GM12878 (cell line): ENCODE measurements at regions of chr1 and their contacts with region 1.

Region 1: GRCh38 chr1:25810341-25811299 is 9.1 kb upstream of the MTFR1L start:
- DNase-seq: no peak
- ATAC-seq: peak; percentile 91
- H3K4me3 ChIP-seq: no peak overlapping the region
- H3K27ac ChIP-seq: no peak overlapping the region
- H3K4me1 ChIP-seq: peaks cover 7% of the 10 kb centered on the region
- H3K27me3 ChIP-seq: no peaks in the 10 kb centered on the region
- CTCF ChIP-seq: peak; percentile 86 to 97 (median 95); a peak in 5 of 6 replicates
- EP300 ChIP-seq: no peak
- POLR2A ChIP-seq: no peak
- RAD21 ChIP-seq: peak; percentile 94

Region 2: DNA sequence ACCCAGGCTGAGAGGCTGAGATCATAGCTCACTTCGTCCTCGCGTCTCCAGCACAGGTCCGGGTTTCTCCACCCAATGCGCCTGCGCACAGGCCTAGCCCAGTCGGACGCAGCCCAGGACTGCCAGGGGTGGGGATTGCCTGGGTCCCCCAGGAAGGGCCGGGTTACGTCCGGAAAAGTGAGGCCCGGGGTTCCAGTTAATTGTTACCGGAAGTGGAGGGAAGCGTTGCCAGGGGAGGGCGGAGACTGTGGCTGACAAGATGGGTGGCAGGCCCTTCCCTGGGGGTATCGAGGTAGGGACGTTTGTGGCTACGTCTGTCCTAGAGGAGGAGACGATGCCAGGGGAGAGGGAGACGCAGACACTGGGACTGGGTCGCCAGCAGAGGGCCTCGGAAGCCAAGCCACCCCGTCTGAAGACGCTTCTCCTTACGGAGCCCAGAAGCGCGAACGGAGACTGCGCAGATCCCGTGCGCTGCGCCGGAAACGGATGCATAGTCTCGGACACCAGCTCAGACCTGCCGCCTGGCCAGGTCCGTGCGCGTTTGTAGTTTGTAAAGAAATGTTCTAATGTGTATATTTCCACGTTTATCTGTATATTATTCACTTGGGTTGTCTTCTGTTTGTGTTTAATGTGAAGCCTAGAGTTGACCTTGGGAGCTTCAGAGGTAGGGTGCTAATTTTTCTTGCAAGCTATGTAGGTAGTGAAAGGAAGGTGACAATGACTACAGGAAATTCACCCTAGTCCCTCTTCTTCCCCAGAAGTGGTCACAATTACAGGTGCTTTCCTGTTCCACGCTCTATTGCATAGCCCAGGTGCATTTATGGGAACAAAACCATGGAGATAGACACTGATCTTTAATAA is 570.7 kb before region 1 on chr1:
- CTCF ChIA-PET with region 1: no interaction called
- POLR2A ChIA-PET with region 1: interaction called, 5 read pairs
- RAD21 ChIA-PET with region 1: no interaction called
- SMC1A ChIA-PET with region 1: no interaction called
- in situ Hi-C with region 1: loop called (anchors 5 kb)
- intact Hi-C with region 1: loop called (anchors 10 kb)
- DNase-seq: peak; percentile 93
- ATAC-seq: peak; percentile 88
- H3K4me3 ChIP-seq: peak overlapping the region; percentile 55
- H3K27ac ChIP-seq: peak overlapping the region; percentile 88
- H3K4me1 ChIP-seq: peaks cover 22% of the 10 kb centered on the region
- H3K27me3 ChIP-seq: no peaks in the 10 kb centered on the region
- CTCF ChIP-seq: peak; percentile 67 to 82 (median 68)
- EP300 ChIP-seq: no peak
- POLR2A ChIP-seq: peak; percentile 83
- RAD21 ChIP-seq: peak; percentile 39; the same call in 1 of the 2 replicates

Region 3: DNA sequence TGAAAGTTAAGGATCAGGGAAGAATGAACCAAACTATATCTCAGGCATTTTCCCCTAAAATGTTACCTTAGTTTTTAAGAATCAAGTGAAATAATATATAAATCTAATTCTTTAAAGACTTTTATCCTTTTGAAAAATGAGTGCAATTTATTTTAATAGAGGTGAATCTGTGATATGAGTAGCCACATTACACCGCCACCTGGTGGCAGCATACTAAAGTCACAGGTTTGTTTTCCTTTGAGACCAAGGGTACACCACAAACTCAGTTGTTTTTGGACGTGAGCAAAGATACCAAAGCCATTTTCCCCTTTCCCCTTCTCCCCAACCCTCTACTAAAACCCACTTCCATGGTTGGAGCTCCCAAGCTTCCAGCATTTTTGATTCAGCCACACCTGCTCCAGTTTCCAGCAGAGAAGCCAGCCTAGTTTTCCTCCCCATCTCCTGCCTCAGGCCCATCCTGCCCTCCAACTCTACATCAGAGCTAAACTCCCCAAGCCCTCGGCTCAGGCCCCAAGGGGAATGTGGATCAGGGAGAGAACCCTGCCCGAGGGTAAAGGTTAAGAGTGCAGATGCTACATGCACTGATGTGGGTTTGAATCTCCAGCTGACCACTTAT is 290.1 kb before region 1 on chr1:
- CTCF ChIA-PET with region 1: interaction called, 16 read pairs
- POLR2A ChIA-PET with region 1: no interaction called
- RAD21 ChIA-PET with region 1: interaction called, 10 read pairs
- SMC1A ChIA-PET with region 1: interaction called, 3 read pairs
- in situ Hi-C with region 1: no loop called
- intact Hi-C with region 1: loop called (anchors 5 kb)
- DNase-seq: peak; percentile 17
- ATAC-seq: peak; percentile 75
- H3K4me3 ChIP-seq: no peak overlapping the region
- H3K27ac ChIP-seq: no peak overlapping the region
- H3K4me1 ChIP-seq: no peaks in the 10 kb centered on the region
- H3K27me3 ChIP-seq: no peaks in the 10 kb centered on the region
- CTCF ChIP-seq: peak; percentile 66 to 77 (median 75); a peak in 5 of 6 replicates
- EP300 ChIP-seq: no peak
- POLR2A ChIP-seq: no peak
- RAD21 ChIP-seq: peak; percentile 72

Region 4: GRCh38 chr1:25608488-25609178 is 202.0 kb before region 1 on chr1:
- CTCF ChIA-PET with region 1: interaction called, 26 read pairs
- POLR2A ChIA-PET with region 1: no interaction called
- RAD21 ChIA-PET with region 1: interaction called, 15 read pairs
- SMC1A ChIA-PET with region 1: interaction called, 6 read pairs
- in situ Hi-C with region 1: no loop called
- intact Hi-C with region 1: no loop called
- DNase-seq: peak; percentile 38
- ATAC-seq: peak; percentile 98
- H3K4me3 ChIP-seq: no peak overlapping the region
- H3K27ac ChIP-seq: no peak overlapping the region
- H3K4me1 ChIP-seq: peaks cover 6% of the 10 kb centered on the region
- H3K27me3 ChIP-seq: peaks cover 0 to 5% of the 10 kb centered on the region in 2 experiments; a peak in 2 of 4 replicates
- CTCF ChIP-seq: peak; percentile 24 to 64 (median 33); a peak in 4 of 6 replicates
- EP300 ChIP-seq: no peak
- POLR2A ChIP-seq: no peak
- RAD21 ChIP-seq: peak; percentile 47; the same call in 1 of the 2 replicates

Region 5: GRCh38 chr1:25796811-25797458 is 13.7 kb before region 1 on chr1:
- CTCF ChIA-PET with region 1: interaction called, 63 read pairs
- POLR2A ChIA-PET with region 1: no interaction called
- RAD21 ChIA-PET with region 1: interaction called, 6 read pairs
- SMC1A ChIA-PET with region 1: interaction called, 5 read pairs
- in situ Hi-C with region 1: no loop called
- intact Hi-C with region 1: no loop called
- DNase-seq: no peak
- ATAC-seq: peak; percentile 70
- H3K4me3 ChIP-seq: no peak overlapping the region
- H3K27ac ChIP-seq: no peak overlapping the region
- H3K4me1 ChIP-seq: peaks cover 2% of the 10 kb centered on the region
- H3K27me3 ChIP-seq: no peaks in the 10 kb centered on the region; a peak in 1 of 4 replicates
- CTCF ChIP-seq: peak; percentile 71 to 82 (median 77)
- EP300 ChIP-seq: no peak
- POLR2A ChIP-seq: no peak
- RAD21 ChIP-seq: peak; percentile 86